ENCODE measurements at regions of chr5 and their contacts with region 1.

Region 1: DNA sequence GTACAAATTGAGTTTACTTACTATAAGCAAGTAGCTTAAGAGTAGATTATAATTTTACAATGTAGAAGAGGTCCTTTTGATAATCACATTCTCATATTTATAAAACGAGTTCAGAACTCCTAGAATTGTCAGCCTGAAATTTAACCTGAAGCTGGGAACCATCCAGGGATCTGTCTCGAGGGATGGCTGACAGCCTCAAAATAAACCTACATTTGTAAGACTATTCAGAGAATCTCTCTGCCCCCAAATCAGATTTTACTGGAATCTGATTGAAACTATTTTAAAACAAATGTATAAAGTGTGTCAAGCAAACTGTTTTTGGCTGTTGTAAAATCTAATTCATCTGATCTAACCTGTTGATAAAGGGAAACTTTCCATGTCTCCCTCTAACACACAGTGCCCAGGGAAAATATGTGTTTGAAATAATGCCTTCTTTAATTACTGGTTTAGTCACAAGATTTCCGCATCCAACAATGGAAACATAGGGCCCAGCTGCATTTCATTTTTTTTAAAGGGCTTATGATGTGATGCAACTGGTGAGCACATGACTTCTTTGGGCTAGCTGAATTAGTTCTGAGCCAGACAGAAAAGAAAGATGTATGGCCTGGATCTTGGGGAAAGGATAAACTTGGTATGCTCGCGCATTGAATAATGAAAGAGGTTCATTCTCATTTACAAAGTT is 30.3 kb downstream of the SLC25A46 start:
- DNase-seq: no peak
- ATAC-seq: no peak
- H3K4me3 ChIP-seq: no peak overlapping the region
- H3K27ac ChIP-seq: no peak overlapping the region
- H3K4me1 ChIP-seq: no peaks in the 10 kb centered on the region
- H3K27me3 ChIP-seq: peaks cover 0 to under 1% (median 0%) of the 10 kb centered on the region in 3 donors
- CTCF ChIP-seq: no peak

Region 2: GRCh38 chr5:110899566-110900412 is 130.6 kb after region 1 on chr5:
- intact Hi-C with region 1: no loop called
- DNase-seq: no peak
- ATAC-seq: no peak
- H3K4me3 ChIP-seq: no peak overlapping the region
- H3K27ac ChIP-seq: no peak overlapping the region
- H3K4me1 ChIP-seq: no peaks in the 10 kb centered on the region
- H3K27me3 ChIP-seq: no peaks in the 10 kb centered on the region
- CTCF ChIP-seq: no peak

Region 3: DNA sequence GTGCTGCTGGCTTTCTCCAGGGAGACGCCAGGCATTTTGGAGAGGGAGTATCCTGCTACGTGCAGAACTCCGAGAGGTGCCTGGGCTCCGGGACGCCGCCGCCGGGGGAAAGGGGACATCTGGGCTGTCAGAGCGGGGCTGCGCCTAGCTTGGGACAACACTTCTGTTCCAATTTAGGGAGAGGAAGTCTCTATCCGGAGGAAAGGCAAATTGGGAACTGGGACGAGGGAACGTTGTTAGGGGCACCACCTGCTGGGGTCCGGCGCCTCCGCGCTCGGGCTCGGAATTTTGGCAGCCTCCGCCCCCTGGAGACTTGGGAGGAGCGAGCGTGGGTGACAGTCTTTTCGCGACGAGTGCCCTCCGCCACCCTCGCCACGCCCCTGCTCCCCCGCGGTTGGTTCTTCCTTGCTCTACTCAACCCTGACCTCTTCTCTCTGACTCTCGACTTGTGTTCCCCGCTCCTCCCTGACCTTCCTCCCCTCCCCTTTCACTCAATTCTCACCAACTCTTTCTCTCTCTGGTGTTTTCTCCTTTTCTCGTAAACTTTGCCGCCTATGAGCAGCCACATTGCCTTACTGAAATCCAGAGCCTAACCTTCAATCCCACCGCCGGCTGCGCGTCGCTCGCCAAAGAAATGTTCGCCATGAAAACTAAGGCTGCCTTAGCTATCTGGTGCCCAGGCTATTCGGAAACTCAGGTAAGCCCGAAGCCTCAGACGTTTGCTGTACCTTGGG is 304.0 kb after region 1 on chr5:
- intact Hi-C with region 1: loop called in 1 of 2 experiments (anchors 10 kb)
- DNase-seq: peak; percentile 68 to 85
- ATAC-seq: peak; percentile 88 to 97 (median 92)
- H3K4me3 ChIP-seq: peak overlapping the region; percentile 78
- H3K27ac ChIP-seq: peak overlapping the region; percentile 11
- H3K4me1 ChIP-seq: peaks cover 6% of the 10 kb centered on the region
- H3K27me3 ChIP-seq: peaks cover 0 to 23% (median 3%) of the 10 kb centered on the region in 3 donors
- CTCF ChIP-seq: no peak

Measured in psoas muscle (tissue), 8 donors.